ENCODE measurements at regions of chr2 and their contacts with region 1.

Region 1: DNA sequence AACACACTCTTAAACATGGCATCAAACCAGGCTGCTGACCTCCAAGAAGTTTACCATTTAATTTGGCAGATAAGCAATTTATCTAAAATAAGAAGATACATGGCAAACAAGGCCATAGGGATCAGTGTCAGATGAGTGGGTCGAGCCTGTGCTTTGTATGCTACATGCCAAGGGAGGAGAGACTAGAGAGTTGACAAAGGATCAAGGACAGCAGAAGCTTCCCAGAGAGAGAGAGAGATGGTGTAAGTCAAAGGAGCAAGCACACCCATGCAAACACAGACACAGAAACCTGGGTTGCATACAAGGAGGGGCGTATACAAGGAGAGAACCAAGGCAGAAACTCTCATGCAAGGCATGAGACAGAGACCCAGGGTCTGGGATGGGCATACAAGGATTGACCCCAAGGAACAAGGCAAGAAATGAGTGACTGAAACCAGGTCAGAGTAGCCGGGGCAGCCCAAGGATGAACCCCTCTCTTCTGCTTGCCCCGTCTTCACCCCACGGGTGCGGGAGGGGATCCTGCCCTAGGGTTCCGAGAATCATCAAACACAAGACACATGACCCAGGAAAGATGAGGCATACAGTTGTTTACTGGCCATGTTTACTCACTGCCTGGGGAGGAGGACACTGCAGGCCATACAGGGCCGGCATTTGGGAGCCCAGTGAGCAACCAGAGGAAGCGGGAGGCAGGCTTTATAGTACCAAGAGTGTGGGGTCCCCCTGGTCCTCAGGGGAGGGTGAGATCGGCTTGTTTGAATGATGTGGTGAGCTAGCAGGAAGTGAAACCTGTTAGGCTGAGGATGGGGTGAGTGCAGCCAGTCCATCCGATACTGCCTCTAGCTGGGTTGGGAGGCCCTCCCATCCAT is 529.2 kb upstream of the ID2 start:
- DNase-seq: no peak
- H3K4me3 ChIP-seq: no peak overlapping the region
- H3K27ac ChIP-seq: no peak overlapping the region
- H3K4me1 ChIP-seq: peaks cover 40% of the 10 kb centered on the region
- H3K27me3 ChIP-seq: no peaks in the 10 kb centered on the region
- CTCF ChIP-seq: no peak
- POLR2A ChIP-seq: no peak

Region 2: GRCh38 chr2:8134985-8135682 is 17.5 kb before region 1 on chr2:
- CTCF ChIA-PET with region 1: no interaction called
- POLR2A ChIA-PET with region 1: no interaction called
- dilution Hi-C with region 1: no loop called
- intact Hi-C with region 1: no loop called
- DNase-seq: no peak
- H3K4me3 ChIP-seq: no peak overlapping the region
- H3K27ac ChIP-seq: no peak overlapping the region
- H3K4me1 ChIP-seq: no peaks in the 10 kb centered on the region
- H3K27me3 ChIP-seq: no peaks in the 10 kb centered on the region
- CTCF ChIP-seq: no peak
- POLR2A ChIP-seq: no peak

Region 3: DNA sequence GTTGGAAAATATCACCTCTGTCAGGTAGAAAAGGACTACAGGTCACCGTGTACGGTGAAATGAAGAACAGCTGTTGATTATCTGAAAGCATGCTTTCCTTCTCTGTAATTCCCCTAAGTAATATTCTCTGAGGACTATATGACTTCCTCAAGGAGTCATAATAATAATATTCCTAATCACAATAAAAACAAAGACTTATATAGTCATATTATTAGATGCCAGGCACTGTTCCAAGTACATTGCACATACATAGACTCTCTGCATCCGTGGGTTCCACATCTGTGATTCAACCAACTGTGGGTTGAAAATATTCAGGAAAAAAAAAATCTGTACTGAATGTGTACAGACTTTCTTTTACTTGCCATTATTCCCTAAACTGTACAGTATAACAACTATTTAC is 16.8 kb after region 1 on chr2:
- CTCF ChIA-PET with region 1: interaction called, 6 read pairs
- POLR2A ChIA-PET with region 1: no interaction called
- dilution Hi-C with region 1: no loop called
- intact Hi-C with region 1: loop called (anchors 1 kb)
- DNase-seq: peak; percentile 58
- H3K4me3 ChIP-seq: no peak overlapping the region
- H3K27ac ChIP-seq: no peak overlapping the region
- H3K4me1 ChIP-seq: peaks cover 26% of the 10 kb centered on the region
- H3K27me3 ChIP-seq: peaks cover 0 to 1% of the 10 kb centered on the region in 2 experiments
- CTCF ChIP-seq: no peak
- POLR2A ChIP-seq: no peak